Common myeloid progenitor, CD34-positive (primary cell): ENCODE measurements at regions of chr16 and their contacts with region 1.

Region 1: DNA sequence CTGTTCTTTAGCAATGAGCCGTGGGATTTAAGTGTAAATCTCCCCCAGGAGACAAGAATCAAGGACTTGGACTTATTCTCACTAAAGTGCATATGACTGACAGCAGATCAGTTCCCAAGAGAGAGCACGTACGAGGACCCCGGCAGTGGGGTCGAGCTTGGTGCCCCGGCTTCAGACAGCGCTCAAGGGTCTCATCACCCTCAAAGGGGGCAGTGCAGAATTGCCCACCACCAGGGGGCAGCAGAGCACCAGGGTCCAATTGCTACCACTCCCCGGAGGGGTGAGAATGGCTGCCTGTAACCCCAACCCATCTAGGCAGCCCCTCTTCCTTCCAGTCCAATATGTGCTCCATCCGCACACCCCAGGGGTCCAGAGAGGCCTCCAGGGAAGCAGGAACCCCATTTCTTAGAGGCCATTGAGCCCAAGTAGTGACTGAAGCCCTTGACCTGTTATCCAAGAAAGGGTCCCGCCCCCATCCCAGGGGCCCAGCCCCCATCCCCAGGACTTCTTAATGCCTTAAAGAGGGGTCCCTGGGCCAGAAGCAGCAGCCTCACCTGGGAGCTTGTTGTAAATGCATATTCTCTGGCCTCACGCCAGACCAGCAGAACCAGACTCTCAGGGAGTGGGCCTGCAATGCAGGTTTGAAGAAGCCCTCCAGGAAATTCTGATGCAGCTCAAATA is 86.1 kb downstream of the ZDHHC7 start:
- DNase-seq: peak; percentile 69 to 79 (median 71)
- H3K4me3 ChIP-seq: no peak overlapping the region
- H3K27ac ChIP-seq: no peak overlapping the region
- H3K4me1 ChIP-seq: no peaks in the 10 kb centered on the region
- H3K27me3 ChIP-seq: peaks cover 0 to 13% (median 0%) of the 10 kb centered on the region in 5 experiments

Region 2: GRCh38 chr16:84864326-84864955 is 60.8 kb before region 1 on chr16:
- CTCF ChIA-PET with region 1: no interaction called
- POLR2A ChIA-PET with region 1: no interaction called
- DNase-seq: no peak
- H3K4me3 ChIP-seq: no peak overlapping the region
- H3K27ac ChIP-seq: no peak overlapping the region
- H3K4me1 ChIP-seq: no peaks in the 10 kb centered on the region
- H3K27me3 ChIP-seq: peaks cover 0 to 15% (median 1%) of the 10 kb centered on the region in 5 experiments

Region 3: GRCh38 chr16:84913315-84913714 is 11.9 kb before region 1 on chr16:
- CTCF ChIA-PET with region 1: interaction called, 23 read pairs
- POLR2A ChIA-PET with region 1: no interaction called
- DNase-seq: peak; percentile 78 to 96 (median 93)
- H3K4me3 ChIP-seq: no peak overlapping the region
- H3K27ac ChIP-seq: no peak overlapping the region
- H3K4me1 ChIP-seq: peaks cover 0 to 13% (median 4%) of the 10 kb centered on the region in 4 experiments
- H3K27me3 ChIP-seq: peaks cover 0 to 19% (median 8%) of the 10 kb centered on the region in 5 experiments

Region 4: GRCh38 chr16:84952335-84953189 is 27.3 kb after region 1 on chr16:
- CTCF ChIA-PET with region 1: interaction called, 121 read pairs
- POLR2A ChIA-PET with region 1: interaction called, 4 read pairs
- DNase-seq: peak; percentile 77 to 87 (median 81)
- H3K4me3 ChIP-seq: peak overlapping the region in 2 of 7 experiments; percentile 1 to 45
- H3K27ac ChIP-seq: peak overlapping the region in 1 of 2 experiments; percentile 27
- H3K4me1 ChIP-seq: peaks cover 11 to 41% (median 34%) of the 10 kb centered on the region in 4 experiments
- H3K27me3 ChIP-seq: peaks cover 0 to 20% (median 0%) of the 10 kb centered on the region in 5 experiments

Region 5: DNA sequence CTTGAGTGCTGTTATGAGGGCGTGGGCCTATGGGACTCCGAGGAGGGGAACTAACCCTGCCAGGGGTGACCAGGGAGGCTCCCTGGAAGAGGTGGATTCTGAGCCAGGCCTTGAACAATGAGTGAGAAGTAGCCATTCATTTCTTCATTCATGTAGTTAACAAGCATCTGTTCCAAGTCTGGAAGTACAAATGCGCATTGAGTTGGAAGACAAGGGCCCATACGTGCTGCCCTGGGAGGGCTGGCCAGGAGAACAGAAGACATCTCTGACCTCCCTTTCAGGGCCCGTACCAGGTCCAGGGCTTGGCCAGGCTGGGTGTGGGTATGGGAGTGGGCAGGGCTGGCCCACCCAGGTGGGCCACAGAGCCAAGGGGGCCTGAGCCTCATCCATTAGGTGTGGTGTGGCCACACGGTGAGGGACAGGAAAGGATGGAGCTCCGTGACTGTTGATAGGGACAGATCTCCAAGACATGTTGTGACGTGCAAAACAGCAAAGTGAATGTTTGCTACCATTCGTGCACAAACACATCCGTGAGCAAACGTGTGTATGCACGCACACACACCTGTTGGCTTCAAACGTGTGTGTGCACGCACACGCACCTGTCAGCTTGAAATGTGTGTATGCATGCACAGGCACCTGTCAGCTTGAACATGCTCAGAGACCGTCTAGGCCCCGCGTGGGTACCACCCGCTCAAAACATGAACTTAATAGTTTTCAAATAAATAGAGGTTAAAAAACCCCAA is 39.3 kb after region 1 on chr16:
- CTCF ChIA-PET with region 1: interaction called, 207 read pairs
- POLR2A ChIA-PET with region 1: no interaction called
- DNase-seq: no peak
- H3K4me3 ChIP-seq: no peak overlapping the region
- H3K27ac ChIP-seq: no peak overlapping the region
- H3K4me1 ChIP-seq: peaks cover 0 to 11% (median 2%) of the 10 kb centered on the region in 4 experiments
- H3K27me3 ChIP-seq: peaks cover 0 to 14% (median 2%) of the 10 kb centered on the region in 5 experiments

Region 6: GRCh38 chr16:84976644-84977400 is 51.6 kb after region 1 on chr16:
- CTCF ChIA-PET with region 1: interaction called, 207 read pairs
- POLR2A ChIA-PET with region 1: no interaction called
- DNase-seq: no peak
- H3K4me3 ChIP-seq: no peak overlapping the region
- H3K27ac ChIP-seq: no peak overlapping the region
- H3K4me1 ChIP-seq: peaks cover 0 to 8% (median 2%) of the 10 kb centered on the region in 4 experiments
- H3K27me3 ChIP-seq: no peaks in the 10 kb centered on the region